Prostate gland (tissue), 2 donors: ENCODE measurements at regions of chr12 and their contacts with region 1.

Region 1: DNA sequence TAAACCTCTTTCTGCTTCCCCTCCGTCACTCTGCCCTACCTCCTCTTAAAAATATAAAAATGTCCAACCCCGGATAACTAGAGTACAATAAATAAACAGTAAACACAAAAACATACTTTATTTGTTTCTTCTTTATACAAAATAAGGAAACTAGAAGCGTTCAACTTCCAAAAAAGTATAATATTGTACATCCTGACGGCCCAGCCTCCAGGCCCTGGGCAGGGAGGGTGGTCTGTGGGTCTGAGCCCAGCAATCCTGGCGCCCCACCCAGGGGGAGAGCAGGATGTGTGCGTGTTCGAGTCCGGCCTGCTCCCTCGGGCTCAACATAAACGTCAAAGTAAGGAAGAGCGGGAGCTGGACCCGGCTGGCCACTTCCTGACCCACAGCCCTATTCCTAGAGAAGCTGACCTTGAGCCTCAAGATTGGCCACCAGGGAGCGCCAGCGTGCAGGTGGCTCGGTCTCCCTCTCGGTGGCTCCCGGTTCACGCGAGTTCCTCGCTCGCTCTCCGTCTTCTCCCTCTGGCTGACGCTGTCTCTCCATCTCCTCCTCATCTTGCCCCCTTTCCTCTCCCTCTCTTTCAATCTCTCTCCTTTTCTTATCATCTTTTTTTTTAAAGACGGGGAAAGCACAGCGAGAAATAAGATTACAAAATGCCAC is 9.4 kb downstream of the LHX5 start:
- DNase-seq: peak; percentile 66
- H3K4me3 ChIP-seq: no peak overlapping the region
- H3K27ac ChIP-seq: no peak overlapping the region
- H3K4me1 ChIP-seq: peaks cover 4% of the 10 kb centered on the region
- H3K27me3 ChIP-seq: peaks cover 49% of the 10 kb centered on the region
- CTCF ChIP-seq: peak; percentile 47 to 77 (median 68)
- POLR2A ChIP-seq: no peak

Region 2: GRCh38 chr12:113348849-113349536 is 113.3 kb before region 1 on chr12:
- intact Hi-C with region 1: no loop called
- DNase-seq: no peak
- H3K4me3 ChIP-seq: no peak overlapping the region
- H3K27ac ChIP-seq: no peak overlapping the region
- H3K4me1 ChIP-seq: no peaks in the 10 kb centered on the region
- H3K27me3 ChIP-seq: no peaks in the 10 kb centered on the region
- CTCF ChIP-seq: no peak
- POLR2A ChIP-seq: no peak

Region 3: DNA sequence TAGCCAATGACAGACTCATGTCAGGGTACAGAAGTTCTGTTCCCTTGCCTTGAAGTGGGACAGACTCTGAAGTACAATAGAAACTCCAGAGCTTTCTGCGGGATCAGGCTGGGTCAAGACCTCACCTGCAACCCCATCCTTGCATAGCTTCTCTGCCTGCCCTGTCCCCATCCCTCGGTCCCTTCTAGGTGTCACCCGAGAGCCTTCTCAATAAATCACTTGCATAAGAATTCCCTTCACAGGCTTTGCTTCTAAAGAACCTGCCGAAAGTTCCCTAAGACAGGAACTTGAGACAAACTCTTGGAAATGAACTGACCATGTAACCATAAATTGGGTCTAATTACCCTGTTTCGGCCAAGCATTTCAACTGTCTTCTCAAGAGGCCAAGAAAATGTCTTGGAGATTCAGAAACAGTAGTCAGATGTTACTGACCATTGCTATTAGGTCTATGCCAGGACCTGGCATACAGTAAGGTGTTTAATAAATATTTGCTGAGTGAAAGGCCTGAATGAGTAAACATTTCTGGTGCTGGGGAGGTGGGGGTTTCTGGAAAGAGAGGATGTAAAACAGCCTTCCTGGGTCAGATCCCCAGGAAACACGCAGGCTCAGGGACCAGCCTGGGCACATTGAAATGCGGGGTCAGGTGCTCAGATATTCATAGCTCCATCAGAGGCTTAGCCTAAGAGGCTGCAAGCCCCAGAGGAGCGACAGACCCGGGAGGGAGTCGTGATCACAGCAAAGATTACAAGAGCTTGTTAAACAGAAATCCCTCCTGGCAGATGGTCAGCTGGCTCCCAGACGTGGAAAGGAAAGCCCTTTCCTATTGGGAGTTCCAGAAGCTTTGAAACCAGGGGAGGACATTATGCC is 235.6 kb after region 1 on chr12:
- intact Hi-C with region 1: loop called (anchors 10 kb)
- DNase-seq: peak; percentile 8
- H3K4me3 ChIP-seq: no peak overlapping the region
- H3K27ac ChIP-seq: no peak overlapping the region
- H3K4me1 ChIP-seq: no peaks in the 10 kb centered on the region
- H3K27me3 ChIP-seq: peaks cover 14% of the 10 kb centered on the region
- CTCF ChIP-seq: no peak
- POLR2A ChIP-seq: no peak

Region 4: DNA sequence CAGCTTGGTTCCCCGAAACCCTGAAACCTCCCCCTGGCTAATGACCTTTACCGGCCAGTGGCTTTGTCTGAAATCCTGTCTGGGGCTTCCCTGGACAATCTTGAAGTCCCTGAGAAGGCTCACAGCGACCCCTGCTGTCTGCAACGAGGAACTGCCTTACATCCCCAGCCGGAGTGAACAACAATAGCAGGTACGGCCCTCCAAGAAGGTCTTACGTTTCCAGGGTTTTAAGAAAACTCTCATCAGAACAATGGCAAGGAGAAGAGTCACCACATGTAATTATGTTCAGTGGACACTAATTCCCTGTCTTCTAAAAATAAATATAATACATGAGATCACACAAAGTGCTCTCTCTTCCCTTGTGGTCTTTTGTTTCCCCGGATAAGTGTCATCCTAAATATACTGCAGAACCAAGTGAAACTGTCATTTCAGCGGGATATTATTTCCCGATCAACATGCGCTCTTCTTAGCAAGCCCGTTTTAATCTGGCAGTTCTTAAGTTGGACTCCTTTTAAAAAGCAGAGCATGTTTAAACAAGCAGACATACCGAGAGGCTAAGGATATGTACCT is 450.6 kb after region 1 on chr12:
- intact Hi-C with region 1: loop called (anchors 5 kb)
- DNase-seq: peak; percentile 66
- H3K4me3 ChIP-seq: no peak overlapping the region
- H3K27ac ChIP-seq: no peak overlapping the region
- H3K4me1 ChIP-seq: no peaks in the 10 kb centered on the region
- H3K27me3 ChIP-seq: no peaks in the 10 kb centered on the region
- CTCF ChIP-seq: peak; percentile 81 to 86 (median 84)
- POLR2A ChIP-seq: no peak